Activated CD8-positive, alpha-beta T cell treated with anti-CD3 and anti-CD28 coated beads for 36 hours (primary cell): ENCODE measurements at regions of chr4 and their contacts with region 1.

Region 1: DNA sequence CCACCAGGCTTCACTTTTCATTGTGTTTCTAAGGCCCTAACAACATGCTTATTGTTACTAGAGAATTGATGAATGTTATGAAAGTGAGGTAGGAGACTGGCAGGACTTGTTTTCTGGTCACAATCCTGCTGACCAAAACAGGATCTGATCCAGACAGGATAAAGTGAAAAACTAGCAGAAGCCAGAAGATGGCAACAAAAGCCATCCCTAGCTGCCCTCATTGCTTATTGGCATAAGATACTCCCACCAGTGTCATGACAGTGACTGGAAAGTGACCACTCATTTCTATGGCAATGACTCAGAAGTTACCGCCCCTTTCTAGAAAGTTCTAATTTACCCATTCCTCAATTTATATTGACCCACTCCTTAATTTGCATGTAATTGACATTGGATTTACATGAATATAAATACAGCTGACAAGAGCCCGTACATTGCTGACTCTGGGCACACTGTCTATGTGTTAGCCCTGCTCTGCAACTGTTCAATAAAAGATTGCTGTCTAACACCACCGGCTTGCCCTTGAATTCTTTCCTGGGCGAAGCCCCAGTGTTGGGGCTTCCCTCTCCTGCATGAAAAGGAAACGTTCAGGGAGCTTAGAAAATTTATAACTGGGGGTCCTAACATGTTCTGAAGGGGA is 30.0 kb upstream of the FGG start:
- DNase-seq: no peak
- ATAC-seq: no peak
- H3K4me3 Mint-ChIP-seq: no peak overlapping the region
- H3K27ac Mint-ChIP-seq: no peak overlapping the region
- H3K4me1 Mint-ChIP-seq: no peaks in the 10 kb centered on the region
- H3K27me3 Mint-ChIP-seq: peaks cover 11% of the 10 kb centered on the region
- CTCF ChIP-seq: no peak

Region 2: GRCh38 chr4:154626793-154627484 is 15.6 kb before region 1 on chr4:
- CTCF ChIA-PET with region 1: interaction called, 15 read pairs
- POLR2A ChIA-PET with region 1: no interaction called
- intact Hi-C with region 1: no loop called
- DNase-seq: peak; percentile 71
- ATAC-seq: peak; percentile 99
- H3K4me3 Mint-ChIP-seq: no peak overlapping the region
- H3K27ac Mint-ChIP-seq: no peak overlapping the region
- H3K4me1 Mint-ChIP-seq: no peaks in the 10 kb centered on the region
- H3K27me3 Mint-ChIP-seq: peaks cover 20% of the 10 kb centered on the region
- CTCF ChIP-seq: peak; percentile 67